Left cardiac atrium (tissue), 4 donors: ENCODE measurements at regions of chr16 and their contacts with region 1.

Region 1: DNA sequence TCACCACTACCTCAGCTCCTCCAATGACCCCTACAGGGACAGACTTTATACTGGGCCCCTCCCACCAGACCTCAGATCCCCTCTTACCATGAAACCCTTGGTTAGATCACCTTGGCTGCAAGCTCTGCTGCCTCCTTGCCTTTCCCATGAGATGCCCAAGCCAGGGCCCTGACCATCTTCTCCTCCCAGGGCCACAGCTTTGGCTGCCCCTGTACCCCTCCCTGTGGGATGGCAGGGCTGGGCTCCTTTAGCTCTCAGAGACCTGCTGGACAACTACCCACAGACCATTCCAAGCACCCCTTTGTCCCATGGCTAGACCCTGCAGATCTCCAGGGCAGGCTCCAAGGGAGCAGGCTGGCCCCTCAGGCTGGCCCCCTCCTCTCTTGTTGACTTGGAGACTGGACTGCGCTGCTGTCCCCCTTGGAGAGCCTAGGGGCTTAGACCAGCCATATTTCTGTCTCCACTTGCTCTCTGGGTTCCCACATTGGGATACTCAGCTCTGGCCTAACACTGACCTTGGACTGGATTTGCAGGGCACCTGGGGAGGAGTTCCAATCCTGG is 1692.7 kb downstream of the TP53TG3F start:
- DNase-seq: no peak
- ATAC-seq: no peak

Region 2: GRCh38 chr16:35207059-35207999 is 55.2 kb after region 1 on chr16:
- intact Hi-C with region 1: loop called in 1 of 2 experiments (anchors 10 kb)
- DNase-seq: no peak
- ATAC-seq: no peak

Region 3: GRCh38 chr16:35605921-35606320 is 453.8 kb after region 1 on chr16:
- intact Hi-C with region 1: no loop called
- DNase-seq: no peak
- ATAC-seq: no peak